Pancreas (tissue), 10 donors: ENCODE measurements at regions of chr18 and their contacts with region 1.

Region 1: GRCh38 chr18:54558609-54559585 is 32.1 kb upstream of the DYNAP start:
- DNase-seq: peak in 1 of 6 donors; percentile 19
- ATAC-seq: peak in 3 of 4 donors; percentile 64 to 78 (median 74)
- H3K4me3 ChIP-seq: no peak overlapping the region
- H3K27ac ChIP-seq: no peak overlapping the region
- H3K4me1 ChIP-seq: no peaks in the 10 kb centered on the region
- H3K27me3 ChIP-seq: no peaks in the 10 kb centered on the region
- CTCF ChIP-seq: peak; percentile 34 to 78 (median 60)

Region 2: DNA sequence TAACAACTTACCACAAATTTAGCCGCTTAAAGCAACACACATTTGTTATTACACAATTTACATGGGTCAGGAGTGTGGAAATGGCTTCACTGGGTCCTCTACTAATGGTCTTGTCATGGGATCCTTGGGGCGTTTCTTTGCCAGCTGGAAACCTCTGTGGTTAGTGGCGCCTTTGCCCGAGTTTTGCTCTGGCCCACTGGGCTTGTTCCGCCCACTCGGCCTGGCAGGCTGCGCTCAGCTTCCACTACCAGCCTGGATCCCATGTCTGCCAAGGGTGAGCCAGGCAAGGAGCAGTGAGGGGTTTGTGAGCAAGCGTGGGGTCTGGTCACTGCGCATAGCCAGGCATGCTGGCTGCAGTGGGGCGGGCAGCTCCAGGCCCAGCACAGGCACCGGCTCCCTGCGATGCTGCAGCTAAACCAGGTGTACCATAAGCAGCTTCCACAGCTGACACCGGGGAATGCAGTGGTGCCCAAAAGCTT is 318.2 kb before region 1 on chr18:
- intact Hi-C with region 1: no loop called
- DNase-seq: peak; percentile 63 to 70 (median 66)
- ATAC-seq: peak; percentile 83 to 90 (median 88)
- H3K4me3 ChIP-seq: peak overlapping the region in 1 of 4 donors; percentile 8
- H3K27ac ChIP-seq: peak overlapping the region; percentile 44 to 88 (median 80)
- H3K4me1 ChIP-seq: peaks cover 12 to 16% (median 12%) of the 10 kb centered on the region in 3 donors
- H3K27me3 ChIP-seq: no peaks in the 10 kb centered on the region
- CTCF ChIP-seq: no peak

Region 3: GRCh38 chr18:54357660-54358494 is 201.0 kb before region 1 on chr18 and contains the starts of genes C18orf54 and STARD6:
- intact Hi-C with region 1: no loop called
- DNase-seq: peak; percentile 67 to 92 (median 82)
- ATAC-seq: peak; percentile 98 to 100 (median 99)
- H3K4me3 ChIP-seq: peak within 1 kb of the TSS; percentile 38 to 73 (median 55)
- H3K27ac ChIP-seq: peak within 1 kb of the TSS in 1 of 4 donors; percentile 22
- H3K4me1 ChIP-seq: peaks cover 0 to 6% (median 0%) of the 10 kb centered on the region in 3 donors
- H3K27me3 ChIP-seq: peaks cover 0 to 12% (median 0%) of the 10 kb centered on the region in 4 donors
- CTCF ChIP-seq: no peak
- total RNA-seq, gene C18orf54: 0.14 to 1.4 (median 0.34) TPM
- total RNA-seq, gene STARD6: not detected

Region 4: DNA sequence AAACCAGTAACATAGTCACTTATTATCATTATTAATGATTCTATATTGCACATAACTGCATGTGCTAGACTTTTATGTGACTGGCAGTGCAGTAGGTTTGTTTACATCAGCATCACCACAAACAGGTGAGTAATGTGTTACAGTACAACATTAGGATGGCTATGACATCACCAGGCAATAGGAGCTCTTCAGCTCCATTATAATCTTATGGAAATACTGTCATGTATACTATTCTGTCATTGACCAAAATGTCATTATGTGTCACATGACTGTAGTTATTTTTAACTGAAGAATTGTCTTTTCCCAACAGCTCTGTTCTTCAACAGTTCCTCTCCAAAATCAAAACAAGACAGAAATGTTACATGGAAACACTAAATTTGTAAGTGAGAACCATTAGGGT is 104.9 kb before region 1 on chr18:
- intact Hi-C with region 1: loop called in 1 of 3 experiments (anchors 10 kb)
- DNase-seq: no peak
- ATAC-seq: no peak
- H3K4me3 ChIP-seq: no peak overlapping the region
- H3K27ac ChIP-seq: no peak overlapping the region
- H3K4me1 ChIP-seq: no peaks in the 10 kb centered on the region
- H3K27me3 ChIP-seq: no peaks in the 10 kb centered on the region
- CTCF ChIP-seq: no peak

Region 5: DNA sequence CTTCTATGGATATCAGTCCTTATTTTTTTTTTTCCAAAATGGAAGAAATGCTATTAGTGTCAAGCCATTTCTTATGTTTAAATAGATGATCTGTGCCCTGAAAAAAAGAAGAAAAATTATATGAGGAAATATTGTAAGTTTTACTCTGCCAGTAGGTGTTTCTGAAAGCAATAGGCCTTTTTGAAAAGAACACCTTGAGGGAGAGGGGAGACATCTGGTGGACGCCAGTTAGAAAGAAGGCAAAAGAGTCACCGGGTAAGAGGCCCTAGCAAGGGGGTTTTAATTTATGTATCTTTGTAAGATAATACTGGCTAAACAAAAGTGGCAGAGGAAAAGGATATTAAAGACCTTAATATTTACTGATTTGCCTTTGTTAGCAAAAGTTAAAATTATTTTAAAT is 88.3 kb after region 1 on chr18:
- intact Hi-C with region 1: loop called in 1 of 3 experiments (anchors 10 kb)
- DNase-seq: peak in 3 of 6 donors; percentile 3 to 32 (median 16)
- ATAC-seq: peak in 3 of 4 donors; percentile 70 to 73 (median 72)
- H3K4me3 ChIP-seq: no peak overlapping the region
- H3K27ac ChIP-seq: no peak overlapping the region
- H3K4me1 ChIP-seq: no peaks in the 10 kb centered on the region
- H3K27me3 ChIP-seq: no peaks in the 10 kb centered on the region
- CTCF ChIP-seq: peak in 3 of 4 donors; percentile 21 to 42 (median 24)

Region 6: GRCh38 chr18:54958657-54959625 is 400.0 kb after region 1 on chr18 and contains the start of gene CCDC68:
- intact Hi-C with region 1: loop called in 1 of 3 experiments (anchors 10 kb)
- DNase-seq: peak; percentile 68 to 90 (median 80)
- ATAC-seq: peak; percentile 98 to 99 (median 99)
- H3K4me3 ChIP-seq: peak within 1 kb of the TSS; percentile 32 to 56 (median 46)
- H3K27ac ChIP-seq: peak within 1 kb of the TSS in 3 of 4 donors; percentile 39 to 67 (median 61)
- H3K4me1 ChIP-seq: peaks cover 0 to 8% (median 4%) of the 10 kb centered on the region in 3 donors
- H3K27me3 ChIP-seq: no peaks in the 10 kb centered on the region
- CTCF ChIP-seq: no peak
- total RNA-seq, gene CCDC68: 0.79 to 5.0 (median 1.2) TPM